CD8-positive, alpha-beta memory T cell (primary cell): ENCODE measurements at regions of chr9 and their contacts with region 1.

Region 1: DNA sequence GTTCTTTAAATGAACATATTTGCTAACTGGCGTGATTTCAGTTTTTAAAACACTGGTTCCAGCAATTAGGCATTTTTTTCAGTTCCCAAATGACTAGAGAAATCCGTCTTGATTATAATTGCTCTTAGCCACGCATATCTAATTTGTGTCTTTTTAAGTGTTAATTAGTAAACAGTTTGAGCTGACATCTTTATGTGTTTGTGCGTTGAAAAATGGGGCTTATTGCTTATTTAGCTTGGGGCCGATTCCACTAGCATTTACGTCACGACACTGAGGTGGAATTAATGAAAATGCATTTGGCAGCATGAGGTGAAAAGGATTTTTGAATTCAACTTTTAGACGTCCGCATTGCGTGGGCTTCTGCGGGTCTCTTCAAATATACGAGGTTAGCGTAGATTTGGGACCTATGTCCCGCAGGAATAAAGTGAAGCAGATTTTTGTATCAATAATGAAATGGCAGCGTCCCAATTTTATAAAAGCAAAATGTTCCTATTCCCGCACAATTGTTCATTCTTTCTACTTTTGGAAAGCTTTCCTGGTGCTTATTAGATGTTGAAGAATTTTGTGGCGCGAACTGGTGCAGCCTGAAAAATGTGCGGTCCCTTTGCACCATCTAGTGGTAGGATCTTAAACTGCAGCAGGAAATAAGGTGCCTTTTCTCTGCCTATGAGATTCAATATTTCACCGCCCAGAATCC is 122.7 kb upstream of the LMX1B start:
- DNase-seq: peak; percentile 34 to 69 (median 54)
- H3K4me3 ChIP-seq: no peak overlapping the region
- H3K4me3 Mint-ChIP-seq: no peak overlapping the region
- H3K27ac ChIP-seq: no peak overlapping the region
- H3K27ac Mint-ChIP-seq: peak overlapping the region in 1 of 8 donors; percentile 1
- H3K4me1 ChIP-seq: peaks cover 5% of the 10 kb centered on the region
- H3K4me1 Mint-ChIP-seq: peaks cover 12 to 19% (median 14%) of the 10 kb centered on the region in 3 donors
- H3K27me3 ChIP-seq: no peaks in the 10 kb centered on the region
- H3K27me3 Mint-ChIP-seq: peaks cover 0 to 8% of the 10 kb centered on the region in 2 donors

Region 2: DNA sequence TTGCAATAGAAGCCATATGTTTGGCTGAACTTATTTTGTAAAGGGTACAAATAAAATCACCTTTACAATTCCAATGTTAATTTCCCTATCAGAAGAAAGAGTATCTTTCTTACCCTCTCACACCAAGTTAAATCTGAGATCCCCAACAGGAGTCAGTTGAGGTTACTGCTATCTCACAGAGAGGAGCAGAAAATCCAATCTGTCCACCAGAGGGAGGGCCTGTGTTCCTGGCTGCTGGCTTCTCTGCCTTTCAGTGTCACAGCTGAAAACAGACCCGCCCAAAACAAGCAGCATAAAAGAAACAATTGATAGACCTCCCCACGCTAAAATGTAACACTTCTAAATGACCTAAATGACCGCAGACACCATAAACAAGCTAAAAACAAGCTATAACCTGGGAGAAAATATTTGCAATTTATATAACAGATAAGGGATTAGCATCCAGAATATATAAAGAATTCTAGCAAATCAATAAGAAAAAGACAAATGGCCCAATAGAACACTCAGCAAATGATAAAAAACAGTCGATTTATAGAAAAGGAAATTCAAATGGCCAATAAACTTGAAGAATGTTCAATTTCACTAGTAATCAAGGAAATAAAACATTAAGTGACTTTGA is 188.9 kb before region 1 on chr9:
- CTCF ChIA-PET with region 1: interaction called, 41 read pairs
- POLR2A ChIA-PET with region 1: interaction called, 4 read pairs
- DNase-seq: peak; percentile 22 to 76 (median 46)
- H3K4me3 ChIP-seq: no peak overlapping the region
- H3K4me3 Mint-ChIP-seq: no peak overlapping the region
- H3K27ac ChIP-seq: no peak overlapping the region
- H3K27ac Mint-ChIP-seq: peak overlapping the region in 1 of 8 donors; percentile 7
- H3K4me1 ChIP-seq: no peaks in the 10 kb centered on the region
- H3K4me1 Mint-ChIP-seq: peaks cover 3 to 11% (median 5%) of the 10 kb centered on the region in 3 donors
- H3K27me3 ChIP-seq: no peaks in the 10 kb centered on the region
- H3K27me3 Mint-ChIP-seq: peaks cover 0 to 4% of the 10 kb centered on the region in 2 donors

Region 3: GRCh38 chr9:126317513-126317912 is 173.5 kb before region 1 on chr9:
- CTCF ChIA-PET with region 1: interaction called, 74 read pairs
- POLR2A ChIA-PET with region 1: no interaction called
- DNase-seq: peak; percentile 27 to 70 (median 31)
- H3K4me3 ChIP-seq: no peak overlapping the region
- H3K4me3 Mint-ChIP-seq: no peak overlapping the region
- H3K27ac ChIP-seq: no peak overlapping the region
- H3K27ac Mint-ChIP-seq: peak overlapping the region in 4 of 8 donors; percentile 1 to 66 (median 52)
- H3K4me1 ChIP-seq: no peaks in the 10 kb centered on the region
- H3K4me1 Mint-ChIP-seq: peaks cover 13 to 26% (median 14%) of the 10 kb centered on the region in 3 donors
- H3K27me3 ChIP-seq: no peaks in the 10 kb centered on the region
- H3K27me3 Mint-ChIP-seq: peaks cover 0 to 8% of the 10 kb centered on the region in 2 donors

Region 4: GRCh38 chr9:126326228-126327005 is 164.6 kb before region 1 on chr9 and contains the start of gene MVB12B:
- CTCF ChIA-PET with region 1: interaction called, 74 read pairs
- POLR2A ChIA-PET with region 1: no interaction called
- DNase-seq: peak; percentile 46 to 75 (median 64)
- H3K4me3 ChIP-seq: peak within 1 kb of the TSS; percentile 74
- H3K4me3 Mint-ChIP-seq: peak within 1 kb of the TSS; percentile 86 to 97 (median 90)
- H3K27ac ChIP-seq: peak within 1 kb of the TSS; percentile 58
- H3K27ac Mint-ChIP-seq: peak within 1 kb of the TSS; percentile 93 to 99 (median 96)
- H3K4me1 ChIP-seq: peaks cover 45% of the 10 kb centered on the region
- H3K4me1 Mint-ChIP-seq: peaks cover 43 to 52% (median 47%) of the 10 kb centered on the region in 3 donors
- H3K27me3 ChIP-seq: no peaks in the 10 kb centered on the region
- H3K27me3 Mint-ChIP-seq: no peaks in the 10 kb centered on the region
- total RNA-seq, gene MVB12B: 11.0 to 13.1 TPM

Region 5: DNA sequence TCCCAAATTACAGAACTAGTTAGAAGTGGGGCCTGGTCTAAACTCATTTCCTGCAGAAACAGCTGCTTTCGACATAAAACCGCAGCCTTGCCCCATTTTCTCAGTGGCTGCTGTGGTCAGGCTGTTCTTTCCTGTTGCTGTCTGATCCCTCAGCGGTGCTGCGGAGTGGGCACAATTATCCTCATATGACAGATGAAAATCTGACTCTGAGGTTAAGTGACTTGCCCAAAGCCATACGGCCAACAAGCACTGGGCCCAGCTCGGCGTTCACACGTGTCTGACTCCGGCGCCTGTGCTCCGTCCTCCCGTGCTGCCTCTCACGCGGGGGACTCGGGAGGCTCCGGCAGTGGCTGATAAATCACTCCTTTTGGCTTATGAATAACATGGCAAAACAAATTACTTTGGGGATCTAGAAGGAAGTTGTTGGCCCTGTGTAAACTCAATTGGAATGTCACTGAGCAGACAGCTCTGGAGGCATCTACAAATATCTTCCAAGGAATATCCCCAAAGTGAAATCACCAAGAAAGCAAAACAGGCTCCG is 19.9 kb before region 1 on chr9:
- CTCF ChIA-PET with region 1: interaction called, 36 read pairs
- POLR2A ChIA-PET with region 1: no interaction called
- DNase-seq: peak; percentile 60 to 90 (median 76)
- H3K4me3 ChIP-seq: peak overlapping the region; percentile 39
- H3K4me3 Mint-ChIP-seq: peak overlapping the region; percentile 71 to 89 (median 80)
- H3K27ac ChIP-seq: no peak overlapping the region
- H3K27ac Mint-ChIP-seq: peak overlapping the region; percentile 91 to 99 (median 96)
- H3K4me1 ChIP-seq: peaks cover 58% of the 10 kb centered on the region
- H3K4me1 Mint-ChIP-seq: peaks cover 82 to 97% (median 84%) of the 10 kb centered on the region in 3 donors
- H3K27me3 ChIP-seq: no peaks in the 10 kb centered on the region
- H3K27me3 Mint-ChIP-seq: peaks cover 0 to 1% of the 10 kb centered on the region in 2 donors

Region 6: DNA sequence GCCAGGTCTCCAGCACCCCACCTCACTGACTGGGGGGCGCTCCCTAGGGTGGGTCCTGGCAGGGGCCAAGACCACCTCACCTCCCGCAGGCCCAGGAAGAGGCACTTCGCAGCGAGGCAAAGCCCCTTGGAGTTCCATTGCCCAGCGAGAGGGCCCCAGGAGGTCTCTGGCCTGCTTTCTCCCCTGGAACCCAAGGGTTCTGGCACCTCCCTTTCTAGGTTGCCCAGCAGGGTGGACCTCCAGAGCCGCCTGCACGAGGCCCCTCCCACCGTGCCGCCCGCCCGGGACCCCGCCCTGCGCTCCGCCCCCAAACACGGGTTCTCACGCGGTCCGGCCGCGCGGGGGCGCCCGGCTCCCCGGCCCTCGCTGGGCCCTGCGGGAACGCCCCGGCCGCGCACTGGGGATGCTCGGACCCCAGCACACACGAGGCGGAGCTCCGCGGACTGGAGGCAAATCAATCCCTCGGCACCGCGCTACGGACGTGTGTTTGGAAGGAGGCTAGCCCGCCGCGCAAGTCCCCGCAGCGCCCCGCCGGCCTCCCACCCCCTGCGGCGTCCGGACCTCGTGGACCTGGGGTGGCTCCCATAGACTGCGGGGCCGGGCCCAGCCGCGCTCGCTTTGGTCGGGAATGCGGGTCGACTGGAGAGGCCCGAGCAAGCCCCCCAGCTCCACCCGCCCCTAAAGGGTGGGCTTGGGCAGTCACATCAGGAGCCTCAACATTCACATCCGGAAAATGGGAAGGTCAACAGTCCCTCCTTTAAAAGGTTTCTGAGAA is 23.2 kb after region 1 on chr9:
- CTCF ChIA-PET with region 1: no interaction called
- POLR2A ChIA-PET with region 1: no interaction called
- DNase-seq: peak; percentile 40 to 73 (median 60)
- H3K4me3 ChIP-seq: no peak overlapping the region
- H3K4me3 Mint-ChIP-seq: peak overlapping the region in 1 of 7 donors; percentile 41
- H3K27ac ChIP-seq: no peak overlapping the region
- H3K27ac Mint-ChIP-seq: no peak overlapping the region
- H3K4me1 ChIP-seq: peaks cover 29% of the 10 kb centered on the region
- H3K4me1 Mint-ChIP-seq: peaks cover 31 to 39% (median 32%) of the 10 kb centered on the region in 3 donors
- H3K27me3 ChIP-seq: peaks cover 12% of the 10 kb centered on the region
- H3K27me3 Mint-ChIP-seq: peaks cover 0 to 43% of the 10 kb centered on the region in 2 donors